ENCODE measurements at regions of chr5 and their contacts with region 1.

Region 1: GRCh38 chr5:148740966-148741742 is 85.3 kb upstream of the ADRB2 start:
- DNase-seq: peak; percentile 77
- H3K27ac ChIP-seq: no peak overlapping the region
- CTCF ChIP-seq: peak; percentile 85

Region 2: DNA sequence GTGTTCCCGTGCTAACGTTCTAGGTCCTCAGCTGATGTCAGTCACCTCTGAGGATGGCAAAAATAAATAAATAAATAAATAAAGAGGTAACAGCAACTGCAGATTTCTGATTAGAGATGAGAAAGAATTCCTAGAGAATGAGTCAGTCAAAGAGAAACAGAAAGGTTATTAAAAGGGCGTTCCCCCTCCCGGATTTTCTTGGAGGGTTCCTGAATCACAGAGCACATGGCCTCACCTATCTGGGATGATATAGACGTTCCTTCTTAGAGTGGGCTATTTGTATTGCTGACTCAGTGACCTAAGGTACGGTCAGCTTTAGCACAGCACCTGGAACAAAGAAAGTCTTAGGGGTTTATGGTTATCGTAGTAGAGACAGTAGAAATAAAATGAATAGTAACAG is 117.4 kb before region 1 on chr5:
- CTCF ChIA-PET with region 1: no interaction called
- POLR2A ChIA-PET with region 1: no interaction called
- DNase-seq: peak; percentile 88
- H3K27ac ChIP-seq: no peak overlapping the region
- CTCF ChIP-seq: no peak

Region 3: DNA sequence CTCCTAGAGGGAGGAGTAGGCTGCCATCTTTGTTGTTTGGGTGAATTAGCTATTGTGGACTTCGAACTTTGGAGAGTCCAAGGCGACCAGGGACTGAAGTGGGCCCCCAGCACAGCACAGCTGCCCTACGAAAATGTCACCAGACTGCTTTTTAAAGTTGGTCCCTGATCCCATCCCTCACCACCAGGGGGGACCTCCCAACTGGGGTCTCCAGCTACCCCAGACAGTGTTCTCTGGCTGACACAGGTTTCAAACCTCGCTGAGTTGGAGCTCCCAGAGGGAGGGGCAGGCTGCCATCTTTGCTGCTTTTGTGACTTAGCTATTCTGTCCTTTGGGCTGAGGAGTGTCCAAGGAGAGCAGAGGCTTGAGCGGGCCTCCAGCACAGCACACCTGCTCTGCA is 39.6 kb after region 1 on chr5:
- CTCF ChIA-PET with region 1: interaction called, 10 read pairs
- POLR2A ChIA-PET with region 1: no interaction called
- DNase-seq: no peak
- H3K27ac ChIP-seq: no peak overlapping the region
- CTCF ChIP-seq: no peak

Region 4: GRCh38 chr5:149284501-149284900 is 543.3 kb after region 1 on chr5:
- CTCF ChIA-PET with region 1: no interaction called
- POLR2A ChIA-PET with region 1: no interaction called
- DNase-seq: no peak
- H3K27ac ChIP-seq: no peak overlapping the region
- CTCF ChIP-seq: no peak

Measured in RWPE1 (cell line).